Activated naive CD4-positive, alpha-beta T cell treated with anti-CD3 and anti-CD28 coated beads for 36 hours (primary cell): ENCODE measurements at regions of chr4 and their contacts with region 1.

Region 1: DNA sequence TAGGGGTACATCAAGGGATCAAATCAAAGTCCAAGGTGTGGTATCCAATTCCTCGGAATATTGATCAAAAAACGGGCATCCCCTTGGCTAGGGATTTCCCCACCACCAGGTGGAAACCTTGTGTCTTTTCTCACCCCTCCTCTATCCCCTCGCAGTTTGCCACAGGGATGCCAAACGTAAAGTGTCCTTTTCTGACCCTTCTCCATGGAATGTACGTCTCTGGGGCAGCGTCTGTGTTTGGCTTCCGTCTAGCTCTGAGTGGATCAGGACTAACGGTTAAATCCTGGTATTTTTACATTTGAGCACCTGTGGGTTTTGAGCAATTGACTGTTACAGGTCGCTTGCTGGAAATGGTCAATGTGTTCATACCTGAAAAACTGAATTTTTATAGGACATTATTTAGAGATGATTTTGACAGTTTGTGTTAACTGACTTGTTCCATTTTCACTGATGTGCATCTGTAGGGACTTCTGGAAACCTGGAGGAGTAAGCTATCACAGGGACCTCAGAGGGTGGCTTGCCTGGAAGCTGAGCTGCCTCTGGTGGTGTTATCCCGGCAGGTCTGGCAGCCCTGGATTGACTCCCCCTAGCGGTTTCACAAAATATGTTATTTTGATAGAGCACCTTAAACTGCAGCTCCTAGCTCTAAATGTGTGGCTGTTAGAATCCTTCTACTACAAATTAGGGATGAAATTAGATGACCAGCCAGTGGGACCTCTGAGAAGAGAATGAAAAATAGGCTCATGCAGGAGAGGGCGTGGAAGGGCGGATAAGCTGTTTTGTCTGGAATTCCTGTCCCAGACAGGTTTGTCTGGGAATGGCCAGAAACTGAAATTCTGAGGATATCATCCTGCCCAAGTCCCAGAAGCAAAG is 8.8 kb upstream of the MGST2 start:
- DNase-seq: peak; percentile 67
- H3K4me3 Mint-ChIP-seq: peak overlapping the region; percentile 57
- H3K27ac Mint-ChIP-seq: peak overlapping the region; percentile 83
- H3K4me1 Mint-ChIP-seq: peaks cover 24% of the 10 kb centered on the region
- H3K27me3 Mint-ChIP-seq: peaks cover 2% of the 10 kb centered on the region

Region 2: DNA sequence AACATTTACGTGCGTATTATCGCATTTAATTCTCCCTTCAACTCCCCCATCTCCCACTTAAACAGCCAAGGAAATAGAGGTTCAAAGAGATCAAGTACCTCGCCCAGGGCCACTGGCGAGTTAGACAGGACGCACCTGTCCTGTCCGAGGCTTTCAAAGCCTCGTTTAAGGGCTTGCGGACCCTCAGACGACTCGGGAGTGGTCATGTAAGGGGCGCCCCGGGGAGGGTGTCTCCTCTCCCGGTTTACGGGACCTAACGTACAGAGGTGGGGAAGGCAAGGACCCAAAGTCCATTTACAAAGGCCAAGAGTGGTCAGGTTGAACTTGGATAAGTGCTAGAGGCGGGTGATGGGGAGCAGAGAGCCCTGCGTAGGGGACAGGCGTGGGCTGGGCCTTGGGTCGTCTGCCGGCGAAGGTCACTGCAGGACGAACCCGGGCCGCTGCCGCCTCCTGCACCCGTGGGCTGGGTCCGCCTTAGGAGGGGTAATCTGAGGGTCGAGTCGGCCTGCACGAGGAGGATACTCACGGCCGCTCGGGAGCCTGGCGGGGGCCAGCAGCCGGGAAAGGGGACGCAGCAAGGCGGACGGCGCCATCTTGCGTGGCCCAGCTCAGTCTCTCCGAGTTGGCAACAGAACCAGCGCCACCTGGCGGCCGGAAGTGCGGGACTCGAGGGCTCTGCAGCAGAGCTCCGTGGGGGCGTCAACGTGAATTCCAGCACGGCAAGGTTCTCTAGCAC is 361.5 kb before region 1 on chr4:
- CTCF ChIA-PET with region 1: no interaction called
- intact Hi-C with region 1: loop called (anchors 5 kb)
- DNase-seq: peak; percentile 99
- H3K4me3 Mint-ChIP-seq: peak overlapping the region; percentile 90
- H3K27ac Mint-ChIP-seq: peak overlapping the region; percentile 97
- H3K4me1 Mint-ChIP-seq: peaks cover 42% of the 10 kb centered on the region
- H3K27me3 Mint-ChIP-seq: no peaks in the 10 kb centered on the region

Region 3: GRCh38 chr4:139704915-139705485 is 48.1 kb after region 1 on chr4:
- CTCF ChIA-PET with region 1: interaction called, 20 read pairs
- intact Hi-C with region 1: loop called (anchors 1 kb)
- DNase-seq: no peak
- H3K4me3 Mint-ChIP-seq: no peak overlapping the region
- H3K27ac Mint-ChIP-seq: no peak overlapping the region
- H3K4me1 Mint-ChIP-seq: no peaks in the 10 kb centered on the region
- H3K27me3 Mint-ChIP-seq: peaks cover 3% of the 10 kb centered on the region

Region 4: DNA sequence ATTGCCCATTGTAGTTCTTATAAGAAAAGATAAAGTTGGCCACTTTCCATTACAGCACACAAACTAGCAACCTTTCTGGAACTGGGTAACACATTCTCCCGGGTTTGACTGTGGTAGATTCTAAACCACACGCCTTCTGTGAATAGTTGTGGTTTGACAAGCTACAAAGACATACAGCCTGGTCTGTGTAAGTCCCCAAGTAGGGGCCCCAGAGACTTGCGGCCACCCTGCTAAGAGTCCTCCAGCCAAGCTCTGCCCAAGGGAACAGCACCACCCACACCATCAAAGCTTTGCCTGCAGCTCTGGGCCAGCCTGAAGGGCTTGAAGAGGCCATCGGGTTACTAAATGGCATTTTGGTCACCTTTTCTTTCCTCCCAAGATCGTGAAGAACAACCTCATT is 293.7 kb after region 1 on chr4:
- CTCF ChIA-PET with region 1: no interaction called
- intact Hi-C with region 1: loop called (anchors 5 kb)
- DNase-seq: peak; percentile 60
- H3K4me3 Mint-ChIP-seq: no peak overlapping the region
- H3K27ac Mint-ChIP-seq: peak overlapping the region; percentile 48
- H3K4me1 Mint-ChIP-seq: peaks cover 25% of the 10 kb centered on the region
- H3K27me3 Mint-ChIP-seq: no peaks in the 10 kb centered on the region

Region 5: DNA sequence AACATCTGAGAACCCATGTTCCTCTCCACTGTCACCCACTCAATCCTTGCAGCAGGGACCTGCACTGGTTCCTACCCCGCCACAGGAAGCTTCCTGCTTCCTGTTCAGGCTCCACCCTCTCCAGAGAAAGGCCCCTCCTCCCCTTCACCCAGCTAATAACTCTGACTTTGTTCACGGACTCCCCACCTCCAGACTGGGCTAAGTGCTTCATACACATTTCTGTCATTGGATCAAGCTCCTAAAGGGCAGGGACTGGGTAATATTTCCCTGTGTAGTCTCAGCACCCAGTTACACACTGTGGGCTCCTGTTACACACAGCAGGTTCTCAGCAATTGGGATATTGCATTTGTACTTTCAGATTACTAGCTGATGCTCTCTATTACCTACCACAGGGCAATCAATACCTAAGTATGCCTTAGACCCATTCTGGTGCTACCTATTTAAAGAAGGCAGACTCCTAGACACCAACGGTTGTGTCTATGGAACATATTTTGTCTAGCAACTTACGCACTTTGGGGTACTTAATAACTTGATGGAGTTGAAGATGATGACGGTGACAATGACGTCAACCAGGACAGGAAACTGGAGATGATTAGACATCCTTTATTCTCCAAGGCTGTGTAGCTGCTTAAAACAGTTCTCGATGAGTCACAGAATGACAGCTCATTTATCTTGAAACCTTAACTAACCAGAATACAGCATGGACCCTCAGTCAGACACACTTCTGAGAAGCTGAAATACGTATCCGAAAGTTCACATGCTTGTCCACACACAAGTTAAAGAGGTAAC is 439.0 kb after region 1 on chr4:
- CTCF ChIA-PET with region 1: interaction called, 3 read pairs
- intact Hi-C with region 1: loop called (anchors 2 kb)
- DNase-seq: peak; percentile 91
- H3K4me3 Mint-ChIP-seq: peak overlapping the region; percentile 90
- H3K27ac Mint-ChIP-seq: peak overlapping the region; percentile 99
- H3K4me1 Mint-ChIP-seq: peaks cover 77% of the 10 kb centered on the region
- H3K27me3 Mint-ChIP-seq: no peaks in the 10 kb centered on the region

Region 6: DNA sequence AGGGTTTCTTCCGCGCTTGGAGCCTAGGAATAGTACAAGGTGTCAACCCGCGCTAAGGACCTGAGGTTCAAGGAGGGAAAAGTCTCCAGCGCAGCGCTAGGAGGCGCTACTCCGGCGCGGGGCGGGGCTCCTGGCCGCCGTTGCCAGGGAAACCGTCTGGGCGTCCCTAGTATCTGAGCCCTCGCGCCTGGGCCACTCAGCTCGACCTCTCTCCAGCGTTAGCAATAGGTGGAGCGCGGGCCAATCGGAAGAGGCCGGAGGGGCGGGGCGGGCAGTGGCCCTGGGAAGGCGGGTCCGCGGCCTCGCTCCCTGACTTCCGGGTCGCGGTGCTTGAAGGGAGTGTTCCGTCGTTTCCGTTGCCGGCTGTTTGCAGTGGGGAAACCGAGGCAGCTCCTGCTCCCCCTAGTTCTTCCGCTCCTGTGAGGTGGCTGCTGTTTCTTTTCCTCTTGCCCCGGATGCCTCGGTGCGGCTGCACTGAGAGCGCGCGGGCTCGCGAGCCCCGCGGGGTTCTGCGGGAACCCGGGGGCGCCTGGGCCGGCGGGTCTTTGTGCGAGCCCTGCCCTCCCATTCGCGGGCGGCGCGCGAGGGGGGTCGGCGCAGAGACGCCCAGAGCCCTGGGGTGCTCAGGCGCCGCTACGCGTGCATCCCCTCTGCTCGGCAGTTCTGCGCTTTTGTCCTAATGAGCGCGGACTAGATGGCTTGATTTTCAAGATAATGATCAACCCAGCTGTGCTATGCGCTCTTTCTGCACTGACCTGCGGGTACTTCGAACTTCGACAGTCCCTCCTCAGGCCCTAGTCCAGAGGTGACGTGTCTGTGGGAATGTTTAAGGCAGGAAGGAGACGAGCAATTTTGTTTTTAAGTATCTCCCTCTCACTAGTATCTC is 867.2 kb after region 1 on chr4 and contains the start of gene ELMOD2:
- CTCF ChIA-PET with region 1: no interaction called
- intact Hi-C with region 1: loop called (anchors 1 kb)
- DNase-seq: peak; percentile 98
- H3K4me3 Mint-ChIP-seq: peak within 1 kb of the TSS; percentile 85
- H3K27ac Mint-ChIP-seq: peak within 1 kb of the TSS; percentile 35
- H3K4me1 Mint-ChIP-seq: peaks cover 11% of the 10 kb centered on the region
- H3K27me3 Mint-ChIP-seq: no peaks in the 10 kb centered on the region
- total RNA-seq, gene ELMOD2: 14.4 to 14.8 TPM